Activated CD4-positive, alpha-beta T cell treated with anti-CD3 and anti-CD28 coated beads, Interleukin-2, amount 10 ng/mL, durations not matched to agents 24 days and 14 days (primary cell): ENCODE measurements at regions of chr11 and their contacts with region 1.

Region 1: DNA sequence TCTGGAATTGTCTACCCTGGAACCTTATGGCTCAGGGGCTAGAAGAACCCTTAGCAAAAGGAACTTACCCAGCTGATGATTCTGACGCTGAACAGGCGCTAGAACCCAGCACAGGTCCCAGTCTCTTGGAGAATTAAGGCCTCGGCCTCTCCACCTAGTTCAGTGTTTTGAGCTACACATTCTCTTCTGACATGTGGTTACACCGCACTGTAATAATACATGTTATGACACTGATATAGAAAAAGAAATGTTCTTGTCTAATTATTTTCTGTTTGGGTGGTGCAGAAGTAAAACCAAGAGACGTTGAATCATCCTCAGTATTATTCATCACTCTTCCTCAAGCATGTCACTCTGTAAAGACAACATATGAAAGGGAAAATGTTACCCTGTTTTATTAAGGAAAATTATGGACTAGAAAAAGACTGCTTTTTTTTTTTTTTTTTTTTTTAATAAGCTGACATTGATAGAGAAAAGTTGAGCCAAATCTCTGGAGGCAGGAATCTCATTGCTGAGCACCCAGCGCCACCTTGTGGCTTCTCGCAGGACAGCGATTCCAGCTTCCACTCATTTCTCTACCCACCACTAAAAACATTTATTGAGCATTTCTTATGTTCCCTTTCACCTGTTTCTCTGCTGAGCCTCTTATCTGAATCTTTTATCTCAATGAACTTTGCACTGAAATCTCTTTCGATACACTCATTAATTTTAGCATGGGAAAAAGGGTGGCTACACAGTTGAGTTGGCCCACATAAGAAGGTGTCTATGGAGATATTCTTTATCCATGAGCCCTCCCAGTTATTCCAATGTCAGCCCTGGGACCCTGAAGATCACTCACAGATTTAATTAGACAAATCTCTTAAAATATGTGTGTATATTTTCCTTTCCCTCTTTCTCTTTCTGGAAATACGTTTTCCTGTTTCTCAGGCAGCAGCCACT is 12.6 kb upstream of the APLNR start:
- DNase-seq: peak; percentile 83
- H3K4me3 Mint-ChIP-seq: no peak overlapping the region
- H3K27ac Mint-ChIP-seq: no peak overlapping the region
- H3K4me1 Mint-ChIP-seq: no peaks in the 10 kb centered on the region
- H3K27me3 Mint-ChIP-seq: peaks cover 12% of the 10 kb centered on the region

Region 2: DNA sequence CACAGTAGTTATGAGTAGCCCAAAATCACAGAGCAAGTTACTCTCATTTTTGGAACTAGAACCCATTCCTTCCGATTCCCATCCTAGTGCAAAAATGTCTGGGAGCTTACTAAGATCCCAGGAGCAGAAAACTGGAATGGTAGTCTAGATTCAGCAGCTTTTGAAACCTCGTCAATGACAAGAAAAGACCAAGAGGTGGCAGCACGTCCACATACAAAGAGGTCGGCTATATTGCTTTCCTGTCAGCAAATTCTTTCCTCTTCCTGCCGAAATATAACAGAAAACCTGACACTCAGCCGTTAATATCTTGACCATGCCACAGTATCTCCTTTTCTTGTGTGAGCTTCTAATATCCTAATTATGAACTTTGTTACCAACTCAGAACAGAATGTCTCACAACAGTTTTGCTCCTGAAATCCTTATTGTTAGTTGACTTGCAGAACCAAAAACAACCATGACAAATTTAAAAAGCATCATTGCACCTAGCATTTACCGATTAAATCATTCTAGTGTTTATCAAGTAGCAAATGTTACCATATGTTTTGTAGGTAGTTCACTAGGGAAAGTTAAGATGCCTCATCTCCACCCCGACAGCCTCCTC is 408.3 kb before region 1 on chr11:
- intact Hi-C with region 1: loop called (anchors 1 kb)
- DNase-seq: peak; percentile 78
- H3K4me3 Mint-ChIP-seq: no peak overlapping the region
- H3K27ac Mint-ChIP-seq: no peak overlapping the region
- H3K4me1 Mint-ChIP-seq: peaks cover 1% of the 10 kb centered on the region
- H3K27me3 Mint-ChIP-seq: no peaks in the 10 kb centered on the region

Region 3: DNA sequence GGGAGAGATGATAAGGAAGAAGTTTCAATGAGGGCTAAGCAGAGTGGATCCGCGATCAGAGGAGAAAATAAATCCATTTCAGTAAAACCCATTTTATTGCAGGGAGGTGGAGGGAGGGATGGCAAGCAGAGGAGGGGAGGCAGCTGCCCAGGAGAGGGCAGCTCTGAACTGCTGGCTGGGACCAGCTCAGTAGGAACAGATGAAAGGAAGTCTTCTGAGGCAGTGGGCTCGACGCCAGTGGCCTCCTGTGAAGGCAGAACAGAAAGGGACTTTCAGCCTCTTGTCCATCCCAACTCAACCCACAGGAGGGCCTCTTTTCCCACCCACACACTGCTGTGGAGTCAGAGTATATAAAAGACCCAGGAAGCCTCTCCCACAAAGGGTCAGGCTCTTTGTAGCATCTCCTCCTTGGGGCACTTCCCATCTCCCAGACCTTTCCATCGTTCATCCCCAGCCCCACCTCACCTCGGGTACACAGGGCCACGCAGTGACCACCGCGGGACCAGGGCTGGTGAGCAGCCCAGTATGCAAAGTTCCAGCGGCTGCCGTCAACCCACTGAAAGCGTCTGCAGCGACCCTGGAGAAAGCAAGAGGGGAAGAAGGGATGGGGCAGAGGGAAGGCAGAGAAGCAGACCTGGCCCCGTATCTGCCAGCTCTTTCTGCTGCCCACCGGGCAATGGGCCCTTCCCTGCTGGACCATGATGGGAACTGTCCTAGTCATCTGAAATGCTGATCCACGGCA is 137.8 kb after region 1 on chr11:
- intact Hi-C with region 1: no loop called
- DNase-seq: no peak
- H3K4me3 Mint-ChIP-seq: no peak overlapping the region
- H3K27ac Mint-ChIP-seq: no peak overlapping the region
- H3K4me1 Mint-ChIP-seq: no peaks in the 10 kb centered on the region
- H3K27me3 Mint-ChIP-seq: peaks cover 4% of the 10 kb centered on the region